ENCODE measurements at regions of chr21 and their contacts with region 1.

Region 1: GRCh38 chr21:43810505-43811261 is 21.3 kb downstream of the RRP1 start:
- DNase-seq: peak; percentile 92 to 95 (median 94)
- ATAC-seq: peak; percentile 89 to 94 (median 92)
- H3K4me3 ChIP-seq: no peak overlapping the region
- H3K27ac ChIP-seq: no peak overlapping the region
- H3K4me1 ChIP-seq: peaks cover 0 to 33% (median 8%) of the 10 kb centered on the region in 4 donors
- H3K27me3 ChIP-seq: no peaks in the 10 kb centered on the region
- CTCF ChIP-seq: peak; percentile 90 to 99 (median 95)
- POLR2A ChIP-seq: no peak

Region 2: GRCh38 chr21:43884012-43884860 is 73.6 kb after region 1 on chr21:
- intact Hi-C with region 1: loop called in 1 of 2 experiments (anchors 10 kb)
- DNase-seq: peak in 1 of 3 donors; percentile 63
- ATAC-seq: peak; percentile 38 to 89 (median 48)
- H3K4me3 ChIP-seq: no peak overlapping the region
- H3K27ac ChIP-seq: no peak overlapping the region
- H3K4me1 ChIP-seq: peaks cover 0 to 9% (median 2%) of the 10 kb centered on the region in 4 donors
- H3K27me3 ChIP-seq: no peaks in the 10 kb centered on the region
- CTCF ChIP-seq: no peak
- POLR2A ChIP-seq: no peak

Region 3: DNA sequence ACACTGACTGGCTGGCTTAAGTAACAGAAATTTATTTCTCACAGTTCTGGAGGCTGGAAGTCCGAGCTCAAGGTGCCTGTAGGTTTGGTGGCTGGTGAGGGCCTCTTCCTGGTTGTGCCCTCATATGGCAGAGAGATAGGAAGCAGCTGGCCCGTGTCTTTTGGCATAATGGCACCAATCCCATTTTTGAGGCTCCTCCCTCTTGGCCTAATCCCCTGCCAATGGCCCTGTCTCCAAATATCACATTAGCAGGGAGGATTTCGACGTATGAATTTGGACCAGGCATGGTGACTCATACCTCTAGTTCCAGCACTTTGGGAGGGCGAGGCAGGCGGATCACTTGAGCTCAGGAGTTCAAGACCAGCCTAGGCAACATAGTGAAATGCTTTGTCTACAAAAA is 91.8 kb after region 1 on chr21:
- intact Hi-C with region 1: loop called in 1 of 2 experiments (anchors 10 kb)
- DNase-seq: no peak
- ATAC-seq: peak; percentile 43 to 68 (median 57)
- H3K4me3 ChIP-seq: no peak overlapping the region
- H3K27ac ChIP-seq: no peak overlapping the region
- H3K4me1 ChIP-seq: peaks cover 0 to 32% (median 7%) of the 10 kb centered on the region in 4 donors
- H3K27me3 ChIP-seq: no peaks in the 10 kb centered on the region
- CTCF ChIP-seq: no peak
- POLR2A ChIP-seq: no peak

Region 4: DNA sequence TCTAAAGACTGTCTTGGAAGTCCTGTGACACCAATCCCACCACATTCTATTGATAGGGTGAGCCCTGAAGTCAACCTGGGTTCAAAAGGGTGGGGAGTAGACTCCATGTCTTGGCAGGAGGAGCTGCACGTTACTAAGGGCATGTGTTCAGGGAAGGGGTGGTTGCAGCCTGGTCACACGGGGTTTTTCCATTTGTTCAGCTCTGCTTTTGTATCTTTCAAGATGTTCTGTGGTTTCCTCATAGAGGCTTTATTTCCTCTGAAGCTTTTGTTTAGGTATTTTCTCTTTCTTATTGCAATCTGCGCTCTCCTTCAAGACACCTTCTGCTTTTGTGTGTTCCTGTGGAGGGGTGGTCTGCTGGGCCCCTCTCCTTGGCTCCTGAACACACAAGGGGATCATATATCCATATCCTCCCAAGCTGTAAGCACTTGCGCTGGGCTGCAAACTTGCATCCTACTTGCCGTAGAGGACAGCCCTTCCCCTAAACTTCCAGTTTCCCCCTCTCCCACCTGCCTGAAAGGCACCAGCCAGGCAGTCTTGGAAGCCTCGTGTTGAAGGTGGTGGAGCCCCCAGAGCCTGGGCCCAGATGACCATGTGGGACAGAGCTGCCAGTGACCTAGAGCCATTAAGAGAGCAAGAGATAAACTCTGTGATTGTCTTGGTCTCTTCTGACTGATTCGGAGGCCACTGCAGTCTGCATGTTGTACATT is 139.0 kb after region 1 on chr21:
- intact Hi-C with region 1: no loop called
- DNase-seq: no peak
- ATAC-seq: no peak
- H3K4me3 ChIP-seq: no peak overlapping the region
- H3K27ac ChIP-seq: no peak overlapping the region
- H3K4me1 ChIP-seq: no peaks in the 10 kb centered on the region
- H3K27me3 ChIP-seq: no peaks in the 10 kb centered on the region
- CTCF ChIP-seq: no peak
- POLR2A ChIP-seq: no peak

Region 5: DNA sequence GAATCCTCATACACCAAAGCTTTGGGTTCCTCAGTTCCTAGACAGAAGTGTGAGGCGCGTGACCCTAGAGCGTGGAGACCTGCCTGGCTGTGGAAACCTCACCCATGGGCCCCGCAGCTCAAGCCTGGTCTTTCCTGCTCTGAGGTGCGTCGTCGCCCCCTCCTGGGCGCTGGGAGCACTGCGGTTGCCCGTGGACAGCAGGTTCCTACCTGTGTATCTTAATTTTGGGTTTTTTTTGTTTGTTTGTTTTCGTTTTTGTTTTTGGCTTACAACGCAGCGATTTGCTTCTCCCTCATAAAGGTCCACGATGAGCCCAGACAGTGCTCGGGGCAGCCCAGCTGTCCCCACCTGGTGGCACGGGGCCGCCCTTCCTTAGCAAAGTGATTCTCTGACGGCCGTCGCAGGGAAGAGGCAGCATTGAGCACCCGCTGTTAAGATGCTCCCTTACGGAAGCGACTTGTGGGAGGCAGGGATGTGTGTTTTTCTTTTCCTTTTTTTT is 164.9 kb after region 1 on chr21:
- intact Hi-C with region 1: loop called (anchors 5 kb)
- DNase-seq: peak; percentile 78 to 80 (median 79)
- ATAC-seq: peak; percentile 81 to 90 (median 84)
- H3K4me3 ChIP-seq: no peak overlapping the region
- H3K27ac ChIP-seq: no peak overlapping the region
- H3K4me1 ChIP-seq: peaks cover 0 to 10% (median 0%) of the 10 kb centered on the region in 4 donors
- H3K27me3 ChIP-seq: no peaks in the 10 kb centered on the region
- CTCF ChIP-seq: peak; percentile 86 to 94 (median 90)
- POLR2A ChIP-seq: no peak

Measured in right lobe of liver (tissue), 6 donors.